Activated B cell treated with CpG ODN at 0.5 μM for 24 hours (primary cell): ENCODE measurements at regions of chrX and their contacts with region 1.

Region 1: GRCh38 chrX:10111364-10112148 is 45.2 kb upstream of the CLCN4 start:
- DNase-seq: peak; percentile 65
- ATAC-seq: peak; percentile 59
- H3K4me3 Mint-ChIP-seq: peak overlapping the region; percentile 84
- H3K27ac Mint-ChIP-seq: peak overlapping the region; percentile 99
- H3K4me1 Mint-ChIP-seq: peaks cover 85% of the 10 kb centered on the region
- H3K27me3 Mint-ChIP-seq: no peaks in the 10 kb centered on the region
- CTCF ChIP-seq: no peak

Region 2: GRCh38 chrX:9995855-9996339 is 115.7 kb before region 1 on chrX:
- CTCF ChIA-PET with region 1: interaction called, 73 read pairs
- POLR2A ChIA-PET with region 1: interaction called, 38 read pairs
- intact Hi-C with region 1: no loop called
- DNase-seq: peak; percentile 66
- ATAC-seq: peak; percentile 77
- H3K4me3 Mint-ChIP-seq: no peak overlapping the region
- H3K27ac Mint-ChIP-seq: no peak overlapping the region
- H3K4me1 Mint-ChIP-seq: peaks cover 12% of the 10 kb centered on the region
- H3K27me3 Mint-ChIP-seq: no peaks in the 10 kb centered on the region
- CTCF ChIP-seq: peak; percentile 76

Region 3: GRCh38 chrX:10014462-10015356 is 96.8 kb before region 1 on chrX:
- CTCF ChIA-PET with region 1: interaction called, 11 read pairs
- POLR2A ChIA-PET with region 1: interaction called, 64 read pairs
- intact Hi-C with region 1: loop called (anchors 1 kb)
- DNase-seq: peak; percentile 81
- ATAC-seq: peak; percentile 83
- H3K4me3 Mint-ChIP-seq: peak overlapping the region; percentile 83
- H3K27ac Mint-ChIP-seq: peak overlapping the region; percentile 69
- H3K4me1 Mint-ChIP-seq: peaks cover 63% of the 10 kb centered on the region
- H3K27me3 Mint-ChIP-seq: no peaks in the 10 kb centered on the region
- CTCF ChIP-seq: no peak

Region 4: DNA sequence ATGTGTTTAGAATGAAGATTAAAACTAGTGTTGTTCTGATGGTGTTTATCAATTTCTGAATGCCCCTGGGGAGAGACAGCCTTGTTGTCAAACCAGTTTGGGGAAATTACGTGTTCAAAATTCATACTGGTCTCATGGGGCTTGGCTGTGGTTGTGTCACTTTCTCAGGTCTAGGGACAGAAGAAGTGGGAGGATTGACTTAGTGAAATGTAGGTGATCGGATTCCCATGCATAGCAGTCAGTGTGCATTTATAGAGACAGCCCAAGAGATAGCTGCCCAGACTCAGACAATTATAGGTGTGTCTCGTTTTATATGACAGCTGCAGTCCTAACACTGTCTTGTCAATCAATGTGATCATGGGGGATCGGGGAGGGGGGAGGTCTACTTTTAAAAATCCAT is 49.2 kb before region 1 on chrX:
- CTCF ChIA-PET with region 1: no interaction called
- POLR2A ChIA-PET with region 1: interaction called, 27 read pairs
- intact Hi-C with region 1: loop called (anchors 5 kb)
- DNase-seq: no peak
- ATAC-seq: peak; percentile 83
- H3K4me3 Mint-ChIP-seq: peak overlapping the region; percentile 22
- H3K27ac Mint-ChIP-seq: peak overlapping the region; percentile 8
- H3K4me1 Mint-ChIP-seq: peaks cover 43% of the 10 kb centered on the region
- H3K27me3 Mint-ChIP-seq: no peaks in the 10 kb centered on the region
- CTCF ChIP-seq: no peak

Region 5: GRCh38 chrX:10086676-10087075 is 24.9 kb before region 1 on chrX:
- CTCF ChIA-PET with region 1: interaction called, 4 read pairs
- POLR2A ChIA-PET with region 1: interaction called, 229 read pairs
- intact Hi-C with region 1: loop called (anchors 1 kb)
- DNase-seq: no peak
- ATAC-seq: no peak
- H3K4me3 Mint-ChIP-seq: no peak overlapping the region
- H3K27ac Mint-ChIP-seq: no peak overlapping the region
- H3K4me1 Mint-ChIP-seq: peaks cover 69% of the 10 kb centered on the region
- H3K27me3 Mint-ChIP-seq: no peaks in the 10 kb centered on the region
- CTCF ChIP-seq: no peak

Region 6: DNA sequence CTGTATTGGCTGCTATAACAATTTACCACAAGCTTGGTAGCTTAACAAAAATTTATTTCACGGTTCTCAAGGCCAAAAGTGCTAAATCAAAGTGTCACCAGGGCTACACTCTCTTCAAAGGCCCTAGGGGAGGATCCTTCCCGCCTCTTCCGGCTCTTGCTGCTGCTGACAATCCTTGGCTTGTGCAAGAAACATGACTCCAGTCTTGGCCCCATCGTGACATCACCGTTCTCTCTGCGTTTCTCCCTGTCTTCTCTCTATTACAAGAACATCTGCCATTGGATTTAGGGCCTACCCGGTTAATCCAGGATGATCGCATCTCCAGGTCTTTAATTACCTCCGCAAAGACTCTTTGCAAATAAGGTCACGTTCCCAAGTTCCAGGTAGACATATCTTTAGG is 34.8 kb after region 1 on chrX:
- CTCF ChIA-PET with region 1: no interaction called
- POLR2A ChIA-PET with region 1: no interaction called
- intact Hi-C with region 1: no loop called
- DNase-seq: no peak
- ATAC-seq: no peak
- H3K4me3 Mint-ChIP-seq: no peak overlapping the region
- H3K27ac Mint-ChIP-seq: no peak overlapping the region
- H3K4me1 Mint-ChIP-seq: peaks cover 26% of the 10 kb centered on the region
- H3K27me3 Mint-ChIP-seq: no peaks in the 10 kb centered on the region
- CTCF ChIP-seq: no peak

Region 7: GRCh38 chrX:11341274-11342201 is 1230.0 kb after region 1 on chrX:
- CTCF ChIA-PET with region 1: no interaction called
- POLR2A ChIA-PET with region 1: no interaction called
- intact Hi-C with region 1: loop called (anchors 1 kb)
- DNase-seq: peak; percentile 16
- ATAC-seq: peak; percentile 75
- H3K4me3 Mint-ChIP-seq: peak overlapping the region; percentile 52
- H3K27ac Mint-ChIP-seq: peak overlapping the region; percentile 91
- H3K4me1 Mint-ChIP-seq: peaks cover 42% of the 10 kb centered on the region
- H3K27me3 Mint-ChIP-seq: no peaks in the 10 kb centered on the region
- CTCF ChIP-seq: no peak